ENCODE measurements at regions of chr15 and their contacts with region 1.

Region 1: GRCh38 chr15:70670680-70671079 is 92.7 kb downstream of the UACA start:
- DNase-seq: no peak
- H3K4me3 ChIP-seq: no peak overlapping the region
- H3K27ac ChIP-seq: no peak overlapping the region
- H3K4me1 ChIP-seq: peaks cover 0 to 22% (median 5%) of the 10 kb centered on the region in 4 donors
- H3K27me3 ChIP-seq: no peaks in the 10 kb centered on the region
- CTCF ChIP-seq: no peak
- EP300 ChIP-seq: no peak
- POLR2A ChIP-seq: no peak

Region 2: DNA sequence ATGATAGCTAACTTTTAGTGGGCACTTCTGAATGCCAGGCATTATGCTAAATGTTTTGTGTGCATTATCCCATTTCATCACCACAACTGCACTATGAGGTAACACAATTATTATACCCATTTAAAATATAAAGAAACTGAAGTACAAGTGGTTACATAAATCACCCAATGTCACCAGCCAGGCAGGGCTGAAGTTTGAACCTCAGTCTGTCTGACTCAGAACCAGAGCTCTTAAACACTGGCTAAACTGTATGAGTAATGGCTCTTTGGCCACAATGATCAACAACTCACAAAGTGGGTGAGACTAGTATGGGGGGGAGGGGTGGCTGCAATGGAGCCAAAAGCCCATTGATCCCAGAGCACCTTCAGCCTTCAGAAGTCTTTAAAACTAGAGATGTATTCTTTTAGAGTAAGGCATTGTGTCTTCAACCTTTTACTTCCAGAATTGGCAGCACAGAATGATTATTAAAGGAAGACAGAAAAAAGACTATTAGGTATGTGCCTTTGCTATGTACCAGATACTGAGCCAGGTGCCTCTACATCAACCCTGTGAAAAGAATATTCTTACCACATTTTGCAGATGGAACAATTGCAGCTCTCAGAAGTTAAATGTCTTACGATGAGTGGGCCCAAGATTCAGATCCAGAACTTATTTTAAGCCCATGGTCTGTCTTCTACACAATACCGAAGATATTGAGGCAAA is 74.2 kb before region 1 on chr15:
- in situ Hi-C with region 1: no loop called
- intact Hi-C with region 1: no loop called
- DNase-seq: no peak
- H3K4me3 ChIP-seq: no peak overlapping the region
- H3K27ac ChIP-seq: no peak overlapping the region
- H3K4me1 ChIP-seq: no peaks in the 10 kb centered on the region
- H3K27me3 ChIP-seq: no peaks in the 10 kb centered on the region
- CTCF ChIP-seq: no peak
- EP300 ChIP-seq: no peak
- POLR2A ChIP-seq: no peak

Region 3: DNA sequence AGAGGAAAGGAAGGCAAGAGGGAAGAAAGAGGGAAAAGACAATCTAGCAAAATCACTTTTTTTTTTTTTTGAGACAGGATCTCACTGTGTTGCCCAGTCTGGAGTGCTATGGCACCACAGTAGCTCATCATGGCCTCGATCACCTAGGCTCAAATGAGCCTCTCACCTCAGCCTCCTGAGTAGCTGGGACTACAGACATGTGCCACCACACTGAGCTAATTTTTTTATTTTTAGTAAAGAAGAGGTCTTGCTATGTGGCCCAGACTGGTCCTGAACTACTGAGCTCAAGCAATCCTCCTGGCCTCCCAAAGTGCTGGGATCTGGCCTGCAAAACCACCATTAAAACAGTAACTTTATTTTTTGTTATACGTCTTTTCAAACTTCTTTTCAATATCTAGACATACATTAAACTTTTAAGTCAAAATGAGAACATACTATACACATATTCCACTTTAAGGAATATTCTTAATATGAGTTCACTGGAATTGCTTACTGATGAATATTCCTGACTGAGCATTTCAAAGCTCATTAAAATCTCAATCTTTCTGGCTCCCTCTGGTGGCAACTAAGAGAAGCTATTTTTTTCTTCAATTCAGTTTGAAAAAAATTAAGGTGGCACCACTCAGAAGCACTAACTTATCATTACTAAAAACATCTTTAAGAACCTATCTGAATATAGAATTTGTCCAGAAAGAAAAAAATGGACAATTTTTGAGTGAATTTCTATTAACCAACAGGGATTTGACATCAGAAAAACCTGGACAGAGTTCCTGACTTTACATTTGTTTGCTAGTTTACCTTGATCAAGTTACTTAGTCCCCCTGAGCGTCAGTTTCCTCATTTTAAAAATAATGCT is 51.8 kb after region 1 on chr15:
- in situ Hi-C with region 1: no loop called
- intact Hi-C with region 1: loop called (anchors 10 kb)
- DNase-seq: no peak
- H3K4me3 ChIP-seq: no peak overlapping the region
- H3K27ac ChIP-seq: peak overlapping the region in 1 of 4 donors; percentile 33
- H3K4me1 ChIP-seq: peaks cover 5 to 42% (median 27%) of the 10 kb centered on the region in 4 donors
- H3K27me3 ChIP-seq: no peaks in the 10 kb centered on the region
- CTCF ChIP-seq: peak; percentile 68 to 85 (median 75)
- EP300 ChIP-seq: no peak
- POLR2A ChIP-seq: no peak

Region 4: DNA sequence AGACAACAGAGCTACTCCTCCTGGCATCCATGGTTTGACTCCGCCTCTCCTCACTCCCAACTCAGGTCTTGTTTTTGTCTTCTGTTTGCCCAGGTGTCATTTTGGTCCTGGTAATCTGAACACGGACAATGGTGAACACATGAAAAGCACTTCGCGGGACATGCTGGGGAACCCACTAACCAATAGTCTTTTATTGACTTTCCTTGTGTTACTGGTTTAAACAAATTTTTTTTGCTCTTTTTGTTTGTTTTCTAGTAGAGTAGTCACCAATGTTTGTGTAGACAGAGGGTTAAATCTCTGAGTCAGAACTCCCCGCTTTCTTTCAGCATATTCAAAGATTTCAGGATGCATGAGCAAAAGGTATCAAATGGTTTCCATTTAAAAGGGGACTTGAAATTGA is 145.0 kb after region 1 on chr15:
- in situ Hi-C with region 1: loop called in 2 of 4 experiments (anchors 10 kb)
- intact Hi-C with region 1: loop called (anchors 5 kb)
- DNase-seq: no peak
- H3K4me3 ChIP-seq: no peak overlapping the region
- H3K27ac ChIP-seq: no peak overlapping the region
- H3K4me1 ChIP-seq: peaks cover 0 to 10% (median 0%) of the 10 kb centered on the region in 4 donors
- H3K27me3 ChIP-seq: peaks cover 4% of the 10 kb centered on the region
- CTCF ChIP-seq: no peak
- EP300 ChIP-seq: no peak
- POLR2A ChIP-seq: no peak

Region 5: DNA sequence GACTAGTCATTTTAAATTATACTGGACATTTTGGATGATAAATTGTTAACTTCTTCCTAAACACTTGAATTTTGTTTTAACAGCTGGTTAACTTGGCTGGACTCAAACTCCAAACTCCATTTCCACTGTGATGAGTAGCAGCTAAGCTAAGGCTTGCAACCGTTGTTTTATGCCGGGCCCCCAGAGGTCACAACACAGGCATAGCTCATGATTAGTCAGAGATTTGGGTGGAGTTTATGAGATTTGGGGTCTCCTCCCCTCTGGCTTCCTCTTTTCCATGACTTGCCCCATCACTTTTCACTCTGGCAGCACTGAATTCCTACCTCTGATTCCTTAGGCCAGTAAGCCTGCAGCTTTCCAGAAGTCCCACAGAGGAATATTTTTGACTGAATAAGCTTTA is 208.7 kb after region 1 on chr15:
- in situ Hi-C with region 1: no loop called
- intact Hi-C with region 1: no loop called
- DNase-seq: no peak
- H3K4me3 ChIP-seq: no peak overlapping the region
- H3K27ac ChIP-seq: no peak overlapping the region
- H3K4me1 ChIP-seq: no peaks in the 10 kb centered on the region
- H3K27me3 ChIP-seq: peaks cover 5% of the 10 kb centered on the region
- CTCF ChIP-seq: no peak
- EP300 ChIP-seq: no peak
- POLR2A ChIP-seq: no peak

Measured in transverse colon (tissue), 4 donors.